Activated CD4-positive, alpha-beta T cell treated with anti-CD3 and anti-CD28 coated beads, Interleukin-2, amount 10 ng/mL, durations not matched to agents 24 days and 14 days (primary cell): ENCODE measurements at regions of chrX and their contacts with region 1.

Region 1: GRCh38 chrX:154097597-154098541 is at the start of gene MECP2:
- DNase-seq: peak; percentile 96
- H3K4me3 Mint-ChIP-seq: peak within 1 kb of the TSS; percentile 93
- H3K27ac Mint-ChIP-seq: peak within 1 kb of the TSS; percentile 99
- H3K4me1 Mint-ChIP-seq: peaks cover 44% of the 10 kb centered on the region
- H3K27me3 Mint-ChIP-seq: peaks cover 6% of the 10 kb centered on the region
- total RNA-seq, gene MECP2: 55.1 and 58.8 TPM in 2 replicates

Region 2: DNA sequence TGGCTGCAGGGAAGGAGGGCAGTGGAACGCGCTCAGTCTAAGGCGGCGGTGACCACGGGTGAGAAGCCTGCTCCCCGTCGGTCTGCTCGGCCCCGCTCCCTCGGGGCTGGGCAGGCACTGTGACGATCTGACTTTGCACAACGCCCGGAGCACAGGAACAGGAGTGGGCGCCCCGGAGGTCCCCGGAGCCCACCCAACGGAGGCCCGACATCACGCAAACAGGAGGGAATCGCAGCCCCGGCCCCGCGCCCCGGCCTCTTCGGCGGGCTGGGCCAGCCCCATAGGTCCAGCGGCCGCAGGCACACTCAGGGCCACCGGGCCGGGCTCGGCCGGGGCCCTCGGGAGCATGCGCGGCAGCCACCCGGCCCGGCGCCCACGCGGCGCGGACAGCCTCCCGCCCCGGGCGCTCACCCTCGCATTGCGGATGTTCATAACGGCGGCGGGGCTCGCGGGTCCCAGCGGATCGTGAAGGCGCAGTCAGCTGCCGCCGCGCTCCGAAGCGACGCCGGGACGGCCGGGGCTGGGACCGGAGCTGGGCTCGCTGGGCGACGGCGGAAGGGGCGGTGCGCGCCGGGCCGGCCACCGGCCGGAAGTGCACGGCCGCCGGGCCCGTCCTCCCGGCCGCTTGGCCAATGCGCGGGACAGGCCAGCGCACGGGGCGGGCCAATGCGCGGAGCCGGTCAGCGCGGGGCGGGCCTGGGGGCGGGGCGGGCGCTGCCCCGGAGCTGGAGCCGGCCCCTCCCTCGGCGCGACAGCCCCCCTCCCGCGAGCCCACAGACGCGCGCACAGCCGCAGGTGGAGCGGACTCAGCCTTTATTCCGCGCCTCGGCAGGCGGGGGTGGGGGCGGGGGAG is 163.2 kb before region 1 on chrX and contains the start of gene NAA10:
- intact Hi-C with region 1: no loop called
- DNase-seq: peak; percentile 89
- H3K4me3 Mint-ChIP-seq: peak within 1 kb of the TSS; percentile 88
- H3K27ac Mint-ChIP-seq: peak within 1 kb of the TSS; percentile 74
- H3K4me1 Mint-ChIP-seq: peaks cover 10% of the 10 kb centered on the region
- H3K27me3 Mint-ChIP-seq: no peaks in the 10 kb centered on the region
- total RNA-seq, gene NAA10: 153 and 168 TPM in 2 replicates

Region 3: DNA sequence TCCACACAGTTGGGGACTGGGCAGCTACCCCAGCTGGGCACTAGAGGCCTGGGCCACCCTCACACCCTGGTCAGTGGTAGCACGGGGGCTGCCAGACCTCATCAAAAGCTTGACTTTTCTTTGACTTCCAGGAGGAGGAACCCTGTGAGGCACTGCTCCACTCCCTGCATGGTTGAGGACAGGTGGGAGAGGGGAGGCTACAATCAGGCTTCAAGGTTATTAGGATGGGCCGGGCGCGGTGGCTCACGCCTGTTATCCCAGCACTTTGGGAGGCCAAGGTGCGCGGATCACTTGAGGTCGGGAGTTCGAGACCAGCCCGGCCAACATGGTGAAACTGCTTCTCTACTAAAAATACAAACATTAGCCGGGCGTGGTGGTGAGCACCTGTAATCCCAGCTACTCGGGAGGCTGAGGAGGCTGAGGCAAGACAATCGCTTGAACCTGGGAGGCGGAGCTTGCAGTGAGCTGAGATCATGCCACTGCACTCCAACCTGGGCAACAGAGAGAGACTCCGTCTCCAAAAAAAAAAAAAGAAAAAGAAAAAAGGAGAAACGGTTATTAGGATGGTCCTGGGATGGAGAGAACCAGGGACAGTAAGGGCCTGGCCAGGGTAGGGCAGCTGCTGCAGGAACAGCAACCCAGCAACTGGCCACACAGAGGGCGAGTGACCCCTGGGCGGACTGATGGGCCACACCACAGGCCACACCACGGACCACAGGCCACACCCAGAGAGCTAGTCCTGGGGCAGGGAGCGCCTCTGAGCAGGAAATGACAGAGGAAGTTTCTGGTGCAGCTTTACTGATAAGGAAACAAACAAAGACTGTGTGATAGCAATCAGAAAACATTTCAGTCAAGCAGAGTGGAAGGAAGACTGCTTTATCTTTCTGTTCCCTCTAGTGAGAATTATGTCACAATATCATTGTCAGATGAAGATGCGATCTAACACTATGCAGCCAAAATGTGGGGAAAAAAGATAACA is 25.7 kb after region 1 on chrX:
- intact Hi-C with region 1: loop called (anchors 2 kb)
- DNase-seq: peak; percentile 84
- H3K4me3 Mint-ChIP-seq: peak overlapping the region; percentile 61
- H3K27ac Mint-ChIP-seq: no peak overlapping the region
- H3K4me1 Mint-ChIP-seq: peaks cover 15% of the 10 kb centered on the region
- H3K27me3 Mint-ChIP-seq: no peaks in the 10 kb centered on the region

Region 4: DNA sequence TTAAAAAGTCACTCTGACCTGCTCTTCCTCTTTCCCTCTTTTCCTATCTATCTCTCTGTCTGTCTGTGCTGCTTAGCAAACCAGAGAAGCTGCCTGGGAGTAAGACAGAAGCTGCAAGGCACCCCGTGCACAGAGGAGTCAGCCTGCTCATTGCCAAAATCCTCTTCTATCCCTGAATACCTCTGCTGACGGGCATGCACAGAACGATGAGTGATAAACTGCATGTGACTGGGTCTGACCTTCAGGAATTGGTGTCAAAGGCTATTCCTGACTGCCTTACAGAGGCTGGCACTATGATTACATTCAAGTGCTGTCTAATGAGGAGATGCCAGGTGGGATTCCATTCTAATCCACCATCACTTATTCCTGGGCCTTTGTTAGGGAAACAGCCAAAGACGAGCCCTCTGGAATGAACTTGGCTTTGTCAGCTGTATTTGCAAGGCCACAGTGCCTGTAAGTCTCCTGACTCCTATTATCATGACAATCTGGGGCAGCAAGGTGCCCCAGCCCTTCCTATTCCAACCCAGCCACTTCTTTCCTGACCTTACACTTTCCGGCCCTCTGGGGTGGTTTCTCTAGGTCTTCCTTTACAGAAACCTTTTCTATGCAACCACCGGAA is 600.9 kb after region 1 on chrX:
- intact Hi-C with region 1: no loop called
- DNase-seq: no peak
- H3K4me3 Mint-ChIP-seq: no peak overlapping the region
- H3K27ac Mint-ChIP-seq: no peak overlapping the region
- H3K4me1 Mint-ChIP-seq: peaks cover 9% of the 10 kb centered on the region
- H3K27me3 Mint-ChIP-seq: no peaks in the 10 kb centered on the region